Activated T-helper 2 cell treated with anti-CD3 and anti-CD28 coated beads, Interferon-gamma antibody, Interleukin-2, Interleukin-4, amounts not matched to agents 10 μg/mL and 5 μg/mL and 100 μg/mL, durations not matched to agents 14 hours and 24 hours and 36 hours (primary cell): ENCODE measurements at regions of chr21 and their contacts with region 1.

Region 1: GRCh38 chr21:31180256-31181081 is 142.2 kb upstream of the KRTAP19-8 start:
- DNase-seq: no peak
- H3K4me3 Mint-ChIP-seq: peak overlapping the region; percentile 93
- H3K27ac Mint-ChIP-seq: peak overlapping the region; percentile 99
- H3K4me1 Mint-ChIP-seq: peaks cover 62% of the 10 kb centered on the region
- H3K27me3 Mint-ChIP-seq: no peaks in the 10 kb centered on the region

Region 2: GRCh38 chr21:31107871-31108270 is 72.6 kb before region 1 on chr21:
- intact Hi-C with region 1: loop called (anchors 1 kb)
- DNase-seq: no peak
- H3K4me3 Mint-ChIP-seq: no peak overlapping the region
- H3K27ac Mint-ChIP-seq: no peak overlapping the region
- H3K4me1 Mint-ChIP-seq: peaks cover 38% of the 10 kb centered on the region
- H3K27me3 Mint-ChIP-seq: no peaks in the 10 kb centered on the region

Region 3: GRCh38 chr21:31161157-31161556 is 19.3 kb before region 1 on chr21:
- intact Hi-C with region 1: loop called (anchors 2 kb)
- DNase-seq: no peak
- H3K4me3 Mint-ChIP-seq: no peak overlapping the region
- H3K27ac Mint-ChIP-seq: no peak overlapping the region
- H3K4me1 Mint-ChIP-seq: peaks cover 58% of the 10 kb centered on the region
- H3K27me3 Mint-ChIP-seq: no peaks in the 10 kb centered on the region

Region 4: GRCh38 chr21:31293986-31294385 is 113.5 kb after region 1 on chr21:
- intact Hi-C with region 1: loop called (anchors 1 kb)
- DNase-seq: no peak
- H3K4me3 Mint-ChIP-seq: no peak overlapping the region
- H3K27ac Mint-ChIP-seq: peak overlapping the region; percentile 20
- H3K4me1 Mint-ChIP-seq: peaks cover 20% of the 10 kb centered on the region
- H3K27me3 Mint-ChIP-seq: no peaks in the 10 kb centered on the region

Region 5: DNA sequence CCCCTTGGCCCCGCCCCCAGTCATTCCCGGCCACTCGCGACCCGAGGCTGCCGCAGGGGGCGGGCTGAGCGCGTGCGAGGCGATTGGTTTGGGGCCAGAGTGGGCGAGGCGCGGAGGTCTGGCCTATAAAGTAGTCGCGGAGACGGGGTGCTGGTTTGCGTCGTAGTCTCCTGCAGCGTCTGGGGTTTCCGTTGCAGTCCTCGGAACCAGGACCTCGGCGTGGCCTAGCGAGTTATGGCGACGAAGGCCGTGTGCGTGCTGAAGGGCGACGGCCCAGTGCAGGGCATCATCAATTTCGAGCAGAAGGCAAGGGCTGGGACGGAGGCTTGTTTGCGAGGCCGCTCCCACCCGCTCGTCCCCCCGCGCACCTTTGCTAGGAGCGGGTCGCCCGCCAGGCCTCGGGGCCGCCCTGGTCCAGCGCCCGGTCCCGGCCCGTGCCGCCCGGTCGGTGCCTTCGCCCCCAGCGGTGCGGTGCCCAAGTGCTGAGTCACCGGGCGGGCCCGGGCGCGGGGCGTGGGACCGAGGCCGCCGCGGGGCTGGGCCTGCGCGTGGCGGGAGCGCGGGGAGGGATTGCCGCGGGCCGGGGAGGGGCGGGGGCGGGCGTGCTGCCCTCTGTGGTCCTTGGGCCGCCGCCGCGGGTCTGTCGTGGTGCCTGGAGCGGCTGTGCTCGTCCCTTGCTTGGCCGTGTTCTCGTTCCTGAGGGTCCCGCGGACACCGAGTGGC is 479.2 kb after region 1 on chr21 and contains the start of gene SOD1:
- intact Hi-C with region 1: loop called (anchors 5 kb)
- DNase-seq: peak; percentile 96
- H3K4me3 Mint-ChIP-seq: peak within 1 kb of the TSS; percentile 99
- H3K27ac Mint-ChIP-seq: peak within 1 kb of the TSS; percentile 98
- H3K4me1 Mint-ChIP-seq: peaks cover 47% of the 10 kb centered on the region
- H3K27me3 Mint-ChIP-seq: no peaks in the 10 kb centered on the region
- total RNA-seq, gene SOD1: 284 and 286 TPM in 2 replicates